ENCODE measurements at regions of chr12 and their contacts with region 1.

Region 1: GRCh38 chr12:6570264-6570887 is 2.3 kb upstream of the NOP2 start:
- DNase-seq: no peak
- H3K4me3 ChIP-seq: no peak overlapping the region
- H3K27me3 ChIP-seq: no peaks in the 10 kb centered on the region
- CTCF ChIP-seq: peak; percentile 62

Region 2: GRCh38 chr12:6606293-6607131 is 36.1 kb after region 1 on chr12:
- CTCF ChIA-PET with region 1: interaction called, 10 read pairs
- POLR2A ChIA-PET with region 1: no interaction called
- DNase-seq: no peak
- H3K4me3 ChIP-seq: peak overlapping the region; percentile 98
- H3K27me3 ChIP-seq: no peaks in the 10 kb centered on the region
- CTCF ChIP-seq: no peak

Region 3: DNA sequence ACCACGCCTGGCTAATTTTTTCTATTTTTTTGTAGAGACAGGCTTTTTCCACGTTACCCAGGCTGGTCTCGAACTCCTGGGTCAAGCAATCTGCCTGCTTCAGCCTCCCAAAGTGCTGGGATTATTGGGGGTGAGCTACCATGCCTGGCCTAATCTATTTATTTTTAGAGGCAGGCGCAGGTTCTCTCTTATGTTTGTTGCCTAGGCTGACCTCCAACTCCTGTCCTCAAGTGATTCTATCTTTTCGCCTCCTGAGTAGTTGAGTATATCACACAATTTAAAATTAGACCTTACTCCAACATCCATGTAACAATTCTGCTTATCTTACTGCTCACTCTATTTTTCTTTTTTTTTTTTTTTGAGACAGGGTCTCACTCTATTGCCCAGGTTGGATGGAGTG is 83.6 kb after region 1 on chr12:
- CTCF ChIA-PET with region 1: no interaction called
- POLR2A ChIA-PET with region 1: no interaction called
- DNase-seq: no peak
- H3K4me3 ChIP-seq: no peak overlapping the region
- H3K27me3 ChIP-seq: no peaks in the 10 kb centered on the region
- CTCF ChIP-seq: no peak